Caco-2 (cell line): ENCODE measurements at regions of chr9 and their contacts with region 1.

Region 1: GRCh38 chr9:110048403-110048975 is 159.5 kb downstream of the C9orf152 start:
- DNase-seq: peak; percentile 85 to 86
- H3K4me3 ChIP-seq: peak overlapping the region; percentile 63
- H3K4me3 Mint-ChIP-seq: peak overlapping the region; percentile 92
- H3K27ac Mint-ChIP-seq: peak overlapping the region; percentile 63
- H3K4me1 ChIP-seq: peaks cover 14% of the 10 kb centered on the region
- H3K4me1 Mint-ChIP-seq: peaks cover 22% of the 10 kb centered on the region
- H3K27me3 ChIP-seq: no peaks in the 10 kb centered on the region
- H3K27me3 Mint-ChIP-seq: no peaks in the 10 kb centered on the region
- CTCF ChIP-seq: no peak

Region 2: DNA sequence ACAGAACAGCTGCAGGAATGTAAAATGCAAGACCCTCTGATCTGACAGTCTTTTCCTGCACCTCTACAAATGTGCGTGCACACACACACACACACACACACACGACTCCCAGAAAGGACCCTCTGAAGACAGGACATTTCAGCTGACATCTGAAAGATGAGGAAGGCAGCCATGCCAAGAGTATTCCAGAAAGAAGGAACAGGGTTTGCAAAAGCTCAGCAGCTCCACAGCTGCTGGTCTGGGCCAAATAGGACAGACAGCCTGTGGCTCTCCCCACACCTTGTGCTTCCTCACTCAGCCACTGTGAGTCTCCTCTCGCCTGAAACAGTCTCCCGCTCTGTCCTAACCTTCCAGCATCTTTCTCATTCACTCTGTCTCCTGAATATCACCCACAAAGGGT is 79.5 kb before region 1 on chr9:
- CTCF ChIA-PET with region 1: no interaction called
- POLR2A ChIA-PET with region 1: no interaction called
- intact Hi-C with region 1: loop called (anchors 2 kb)
- DNase-seq: peak; percentile 54 to 58
- H3K4me3 ChIP-seq: no peak overlapping the region
- H3K4me3 Mint-ChIP-seq: no peak overlapping the region
- H3K27ac Mint-ChIP-seq: no peak overlapping the region
- H3K4me1 ChIP-seq: no peaks in the 10 kb centered on the region
- H3K4me1 Mint-ChIP-seq: no peaks in the 10 kb centered on the region
- H3K27me3 ChIP-seq: no peaks in the 10 kb centered on the region
- H3K27me3 Mint-ChIP-seq: no peaks in the 10 kb centered on the region
- CTCF ChIP-seq: peak in 1 of 2 experiments; percentile 37

Region 3: DNA sequence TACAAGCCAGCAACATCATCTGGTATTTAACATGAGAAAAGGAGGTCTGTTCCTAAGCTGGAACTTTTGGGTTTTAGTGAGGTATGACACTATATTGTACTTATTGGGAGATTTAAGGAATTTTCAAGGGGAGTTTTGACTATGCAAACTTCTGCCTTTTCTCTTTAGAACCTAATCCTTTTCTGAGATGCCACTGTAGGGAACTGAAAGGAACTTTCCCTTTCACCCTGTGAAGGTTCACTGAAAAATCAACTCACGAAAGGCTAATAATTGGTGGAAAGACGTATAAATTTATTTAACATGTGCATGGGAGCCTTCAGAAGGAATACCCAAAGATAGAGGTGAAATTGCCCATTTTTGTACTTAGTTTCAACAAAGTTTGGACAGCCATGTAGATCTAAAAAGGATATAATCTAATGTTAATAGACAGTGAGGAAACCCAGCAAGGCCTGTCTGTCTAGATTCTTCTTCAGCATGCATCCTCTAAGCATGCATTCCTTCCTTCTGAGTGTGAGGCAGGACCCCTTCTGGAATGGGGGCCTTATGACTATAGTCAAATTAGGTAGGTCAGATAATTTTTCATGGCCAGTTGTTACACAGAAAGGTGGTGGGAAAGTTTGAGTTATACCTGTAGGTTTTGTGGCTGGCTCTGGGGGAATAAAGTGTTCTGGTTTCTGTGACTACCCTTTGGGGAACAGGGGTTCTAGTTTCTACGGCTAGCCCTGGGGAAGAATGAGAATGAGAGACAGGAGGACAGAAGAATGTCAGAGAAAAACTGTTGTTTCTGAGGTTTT is 40.8 kb before region 1 on chr9:
- CTCF ChIA-PET with region 1: no interaction called
- POLR2A ChIA-PET with region 1: no interaction called
- intact Hi-C with region 1: loop called (anchors 2 kb)
- DNase-seq: no peak
- H3K4me3 ChIP-seq: no peak overlapping the region
- H3K4me3 Mint-ChIP-seq: no peak overlapping the region
- H3K27ac Mint-ChIP-seq: no peak overlapping the region
- H3K4me1 ChIP-seq: peaks cover 22% of the 10 kb centered on the region
- H3K4me1 Mint-ChIP-seq: peaks cover 16% of the 10 kb centered on the region
- H3K27me3 ChIP-seq: no peaks in the 10 kb centered on the region
- H3K27me3 Mint-ChIP-seq: no peaks in the 10 kb centered on the region
- CTCF ChIP-seq: no peak

Region 4: GRCh38 chr9:110029429-110029955 is 19.0 kb before region 1 on chr9:
- CTCF ChIA-PET with region 1: interaction called, 3 read pairs
- POLR2A ChIA-PET with region 1: no interaction called
- intact Hi-C with region 1: loop called (anchors 1 kb)
- DNase-seq: peak; percentile 71 to 74
- H3K4me3 ChIP-seq: no peak overlapping the region
- H3K4me3 Mint-ChIP-seq: peak overlapping the region; percentile 16
- H3K27ac Mint-ChIP-seq: peak overlapping the region; percentile 62
- H3K4me1 ChIP-seq: peaks cover 51% of the 10 kb centered on the region
- H3K4me1 Mint-ChIP-seq: peaks cover 18% of the 10 kb centered on the region
- H3K27me3 ChIP-seq: no peaks in the 10 kb centered on the region
- H3K27me3 Mint-ChIP-seq: no peaks in the 10 kb centered on the region
- CTCF ChIP-seq: no peak

Region 5: GRCh38 chr9:110125207-110125751 is 76.8 kb after region 1 on chr9:
- CTCF ChIA-PET with region 1: no interaction called
- POLR2A ChIA-PET with region 1: interaction called, 6 read pairs
- intact Hi-C with region 1: loop called (anchors 1 kb)
- DNase-seq: peak; percentile 96 to 97
- H3K4me3 ChIP-seq: peak overlapping the region; percentile 49
- H3K4me3 Mint-ChIP-seq: peak overlapping the region; percentile 90
- H3K27ac Mint-ChIP-seq: peak overlapping the region; percentile 97
- H3K4me1 ChIP-seq: peaks cover 51% of the 10 kb centered on the region
- H3K4me1 Mint-ChIP-seq: peaks cover 33% of the 10 kb centered on the region
- H3K27me3 ChIP-seq: no peaks in the 10 kb centered on the region
- H3K27me3 Mint-ChIP-seq: no peaks in the 10 kb centered on the region
- CTCF ChIP-seq: no peak

Region 6: DNA sequence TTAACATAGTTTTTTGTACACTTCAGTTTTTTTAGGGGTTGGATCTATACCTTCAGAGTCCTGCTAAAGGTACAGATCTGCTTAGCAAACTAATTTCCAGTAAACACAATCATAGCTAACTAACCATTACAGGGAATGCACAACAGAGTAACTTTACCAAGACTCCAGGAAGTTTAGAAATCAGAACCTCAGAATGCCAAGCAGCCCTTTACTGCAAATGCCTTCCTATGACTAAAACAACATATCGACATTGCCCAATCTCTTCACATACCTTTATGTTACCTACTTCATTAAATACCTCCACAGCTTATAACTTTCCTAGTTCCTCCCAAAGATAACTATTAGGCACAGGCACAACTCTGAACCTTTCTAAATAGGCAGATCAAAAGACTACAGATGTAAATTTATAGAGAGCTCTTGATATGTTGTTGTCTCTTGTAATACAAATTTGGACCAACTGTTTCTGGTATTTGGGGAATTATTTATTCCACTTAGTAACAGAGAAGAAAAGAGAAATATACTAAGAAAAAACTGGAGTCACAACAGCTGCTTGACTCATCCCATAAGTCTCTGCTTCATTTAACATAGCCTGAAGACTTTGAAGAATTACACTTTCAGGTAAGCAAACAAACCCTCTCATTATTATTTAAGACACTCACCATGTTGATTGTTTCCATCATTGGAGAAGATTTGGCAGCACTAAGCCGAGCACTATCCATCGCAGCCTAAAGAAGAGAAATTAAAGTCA is 1327.5 kb after region 1 on chr9:
- CTCF ChIA-PET with region 1: no interaction called
- POLR2A ChIA-PET with region 1: no interaction called
- intact Hi-C with region 1: no loop called
- DNase-seq: no peak
- H3K4me3 ChIP-seq: no peak overlapping the region
- H3K4me3 Mint-ChIP-seq: no peak overlapping the region
- H3K27ac Mint-ChIP-seq: no peak overlapping the region
- H3K4me1 ChIP-seq: no peaks in the 10 kb centered on the region
- H3K4me1 Mint-ChIP-seq: no peaks in the 10 kb centered on the region
- H3K27me3 ChIP-seq: no peaks in the 10 kb centered on the region
- H3K27me3 Mint-ChIP-seq: no peaks in the 10 kb centered on the region
- CTCF ChIP-seq: no peak